Naive thymus-derived CD8-positive, alpha-beta T cell (primary cell): ENCODE measurements at regions of chr2 and their contacts with region 1.

Region 1: DNA sequence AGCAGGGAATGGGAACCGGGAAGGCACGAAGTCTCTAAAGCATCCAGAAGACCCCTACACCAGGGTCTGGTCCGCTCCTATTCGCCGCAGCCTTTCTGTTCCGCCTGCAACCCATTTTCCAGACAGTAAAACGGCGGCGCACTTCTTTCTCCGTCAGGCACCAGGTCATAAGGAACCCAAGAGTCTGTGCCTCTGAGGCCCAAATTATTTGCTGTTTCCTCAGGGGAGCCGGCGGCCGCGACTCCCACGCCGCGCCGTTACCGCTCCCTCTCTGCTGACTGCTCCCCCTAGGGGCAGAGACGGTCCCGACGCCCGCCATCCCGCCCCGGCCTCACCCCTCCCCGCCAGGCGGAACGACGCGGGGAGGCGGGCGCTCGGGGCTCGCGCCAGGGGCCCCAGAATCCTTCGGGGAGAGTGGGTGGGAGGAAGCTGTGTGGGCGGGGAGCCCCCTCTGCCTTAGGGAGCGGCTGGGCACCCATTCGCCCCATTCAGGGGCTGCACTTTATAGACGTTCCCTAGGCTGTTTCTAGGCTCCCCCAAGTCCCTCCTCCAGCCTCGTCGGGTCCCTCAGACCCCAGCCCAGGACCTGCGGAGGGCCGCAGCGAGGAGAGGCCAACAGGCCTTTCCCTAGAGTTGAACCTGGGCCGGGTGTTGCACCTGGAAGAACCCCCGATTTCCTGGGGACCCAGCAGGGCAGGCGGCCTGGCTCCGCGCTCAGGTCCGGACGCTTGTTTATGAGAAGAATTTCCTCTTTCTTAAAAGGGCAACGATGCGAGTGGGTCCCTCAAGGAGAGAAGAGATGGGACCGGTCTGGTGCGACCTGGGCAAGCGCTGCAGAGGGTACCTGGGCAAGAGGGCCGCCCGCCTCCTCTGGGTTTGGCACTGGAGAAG is 3.6 kb upstream of the CTDSP1 start:
- DNase-seq: peak; percentile 91 to 99 (median 94)
- ATAC-seq: peak; percentile 55 to 70
- H3K4me3 Mint-ChIP-seq: peak overlapping the region; percentile 89 to 98 (median 94)
- H3K27ac Mint-ChIP-seq: peak overlapping the region; percentile 96 to 100 (median 98)
- H3K4me1 Mint-ChIP-seq: peaks cover 21 to 53% (median 44%) of the 10 kb centered on the region in 4 donors
- H3K27me3 Mint-ChIP-seq: no peaks in the 10 kb centered on the region

Region 2: DNA sequence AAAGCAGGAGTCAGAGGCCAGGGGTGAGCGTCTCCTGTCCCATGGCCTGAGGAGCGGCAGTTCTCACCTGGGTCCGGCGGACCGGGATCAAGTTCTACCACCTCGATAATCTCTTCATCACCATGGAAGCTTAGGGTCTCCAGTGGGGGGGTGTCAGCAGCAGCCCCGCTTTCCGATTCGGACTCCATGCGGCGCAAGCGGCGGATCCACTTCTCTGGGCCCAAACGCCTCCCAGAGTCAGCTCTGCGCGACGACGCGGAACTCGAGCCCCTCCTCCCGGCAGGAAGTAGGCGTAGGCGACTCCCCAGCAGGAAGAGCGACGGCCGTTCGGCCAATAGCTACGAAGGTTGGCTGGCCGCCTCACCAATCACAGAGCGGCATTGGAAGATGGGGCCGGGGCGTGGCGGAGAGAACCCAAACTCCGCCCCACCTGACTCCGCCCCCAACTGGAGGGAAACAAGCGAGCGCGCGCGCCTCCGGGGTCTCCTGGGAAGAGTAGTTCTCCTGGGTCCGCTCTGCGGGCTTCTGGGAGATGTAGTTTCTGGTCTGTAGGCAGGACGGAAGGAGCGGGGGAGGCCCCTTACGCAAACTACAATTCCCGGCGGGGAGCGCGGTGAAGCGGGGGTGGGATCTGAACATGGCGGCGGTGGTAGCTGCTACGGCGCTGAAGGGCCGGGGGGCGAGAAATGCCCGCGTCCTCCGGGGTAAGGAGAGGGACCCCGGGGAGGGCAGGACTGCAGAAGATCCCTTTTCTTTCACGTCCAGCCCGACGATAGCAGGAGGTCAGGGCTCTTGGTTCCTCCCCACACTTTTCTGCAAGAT is 125.9 kb before region 1 on chr2 and contains the starts of genes AAMP and PNKD:
- POLR2A ChIA-PET with region 1: interaction called, 30 read pairs
- DNase-seq: peak; percentile 99 to 100 (median 100)
- ATAC-seq: peak; percentile 89 to 91
- H3K4me3 Mint-ChIP-seq: peak within 1 kb of the TSS; percentile 88 to 97 (median 94)
- H3K27ac Mint-ChIP-seq: peak within 1 kb of the TSS; percentile 83 to 98 (median 95)
- H3K4me1 Mint-ChIP-seq: peaks cover 31 to 65% (median 56%) of the 10 kb centered on the region in 4 donors
- H3K27me3 Mint-ChIP-seq: no peaks in the 10 kb centered on the region
- polyA plus RNA-seq, gene AAMP: 77.0 to 93.6 (median 89.7) TPM
- polyA plus RNA-seq, gene PNKD: 108 to 119 (median 109) TPM

Region 3: GRCh38 chr2:218292048-218293014 is 103.7 kb before region 1 on chr2 and contains the start of gene TMBIM1:
- POLR2A ChIA-PET with region 1: interaction called, 34 read pairs
- DNase-seq: peak; percentile 66 to 90 (median 82)
- ATAC-seq: peak; percentile 79 to 86
- H3K4me3 Mint-ChIP-seq: peak within 1 kb of the TSS; percentile 87 to 99 (median 96)
- H3K27ac Mint-ChIP-seq: peak within 1 kb of the TSS; percentile 97 to 99 (median 98)
- H3K4me1 Mint-ChIP-seq: peaks cover 27 to 64% (median 59%) of the 10 kb centered on the region in 4 donors
- H3K27me3 Mint-ChIP-seq: no peaks in the 10 kb centered on the region
- polyA plus RNA-seq, gene TMBIM1: 75.8 to 114 (median 80.3) TPM

Region 4: GRCh38 chr2:218317232-218317630 is 78.8 kb before region 1 on chr2:
- POLR2A ChIA-PET with region 1: interaction called, 31 read pairs
- DNase-seq: no peak
- ATAC-seq: no peak
- H3K4me3 Mint-ChIP-seq: peak overlapping the region; percentile 4 to 95 (median 84)
- H3K27ac Mint-ChIP-seq: peak overlapping the region; percentile 94 to 99 (median 99)
- H3K4me1 Mint-ChIP-seq: peaks cover 36 to 65% (median 58%) of the 10 kb centered on the region in 4 donors
- H3K27me3 Mint-ChIP-seq: peaks cover 0 to 1% (median 0%) of the 10 kb centered on the region in 5 donors

Region 5: GRCh38 chr2:218406209-218406948 is 10.3 kb after region 1 on chr2:
- POLR2A ChIA-PET with region 1: interaction called, 69 read pairs
- DNase-seq: peak; percentile 78 to 95 (median 88)
- ATAC-seq: peak; percentile 65 to 72
- H3K4me3 Mint-ChIP-seq: peak overlapping the region; percentile 81 to 94 (median 88)
- H3K27ac Mint-ChIP-seq: peak overlapping the region; percentile 89 to 98 (median 94)
- H3K4me1 Mint-ChIP-seq: peaks cover 29 to 65% (median 62%) of the 10 kb centered on the region in 4 donors
- H3K27me3 Mint-ChIP-seq: no peaks in the 10 kb centered on the region

Region 6: GRCh38 chr2:218466016-218466521 is 70.0 kb after region 1 on chr2:
- POLR2A ChIA-PET with region 1: no interaction called
- DNase-seq: peak in 3 of 10 donors; percentile 13 to 19 (median 19)
- ATAC-seq: no peak
- H3K4me3 Mint-ChIP-seq: no peak overlapping the region
- H3K27ac Mint-ChIP-seq: peak overlapping the region in 2 of 10 donors; percentile 11 to 33
- H3K4me1 Mint-ChIP-seq: peaks cover 4 to 17% (median 7%) of the 10 kb centered on the region in 4 donors
- H3K27me3 Mint-ChIP-seq: no peaks in the 10 kb centered on the region

Region 7: GRCh38 chr2:218516614-218517013 is 120.6 kb after region 1 on chr2:
- POLR2A ChIA-PET with region 1: no interaction called
- DNase-seq: peak in 4 of 10 donors; percentile 2 to 44 (median 36)
- ATAC-seq: peak; percentile 54 to 68
- H3K4me3 Mint-ChIP-seq: no peak overlapping the region
- H3K27ac Mint-ChIP-seq: peak overlapping the region in 2 of 10 donors; percentile 20 to 33
- H3K4me1 Mint-ChIP-seq: peaks cover 0 to 6% (median 3%) of the 10 kb centered on the region in 4 donors
- H3K27me3 Mint-ChIP-seq: no peaks in the 10 kb centered on the region